ENCODE measurements at regions of chr14 and their contacts with region 1.

Region 1: DNA sequence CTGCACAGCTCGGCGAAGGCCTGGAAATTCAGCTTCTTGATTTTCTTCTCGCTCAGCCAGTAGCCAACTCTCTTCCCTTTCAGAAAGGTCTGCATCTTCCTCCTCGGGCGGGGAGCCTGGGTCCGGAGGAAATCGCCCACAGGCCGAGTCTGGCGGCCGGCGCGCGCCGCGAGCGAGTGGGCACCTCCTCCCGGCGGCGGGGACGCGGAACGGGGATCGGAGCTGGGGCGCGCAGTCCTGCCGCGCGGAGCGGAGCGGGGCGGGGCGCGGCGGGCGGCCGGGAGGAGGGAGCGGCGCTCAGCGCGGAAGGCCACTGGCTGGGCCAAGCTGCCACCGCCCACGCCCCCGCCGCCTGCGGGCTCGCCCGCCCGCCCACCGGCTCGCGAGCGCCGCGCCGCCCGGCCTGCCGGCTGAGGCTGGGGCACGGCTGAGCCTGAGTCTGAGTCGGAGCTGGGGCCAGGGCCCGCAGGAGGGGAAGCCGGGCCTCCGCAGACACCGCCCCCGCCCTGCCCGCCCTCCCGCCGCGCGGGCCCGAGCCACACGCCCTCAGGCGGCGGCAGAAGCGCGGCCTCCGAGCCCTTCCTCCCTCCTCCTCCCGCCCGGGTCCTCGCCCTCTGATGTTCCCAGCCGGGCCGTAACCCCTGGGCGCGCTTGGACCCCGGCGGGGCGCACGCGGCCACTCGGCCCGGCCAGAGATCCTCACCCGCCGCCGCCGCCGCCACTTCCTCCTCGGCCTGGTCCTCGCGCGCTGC is 480 bp downstream of the ITPK1 start:
- DNase-seq: peak; percentile 92
- ATAC-seq: peak; percentile 74
- H3K4me3 ChIP-seq: peak overlapping the region; percentile 37 to 89 (median 79)
- H3K4me3 Mint-ChIP-seq: peak overlapping the region; percentile 92
- H3K27ac ChIP-seq: peak overlapping the region; percentile 34 to 74
- H3K27ac Mint-ChIP-seq: peak overlapping the region; percentile 89
- H3K4me1 ChIP-seq: peaks cover 27 to 34% of the 10 kb centered on the region in 2 donors
- H3K4me1 Mint-ChIP-seq: peaks cover 32% of the 10 kb centered on the region
- H3K27me3 ChIP-seq: no peaks in the 10 kb centered on the region
- H3K27me3 Mint-ChIP-seq: no peaks in the 10 kb centered on the region
- CTCF ChIP-seq: peak; percentile 12

Region 2: GRCh38 chr14:92963301-92964123 is 151.7 kb before region 1 on chr14:
- CTCF ChIA-PET with region 1: no interaction called
- POLR2A ChIA-PET with region 1: no interaction called
- intact Hi-C with region 1: no loop called
- DNase-seq: no peak
- ATAC-seq: no peak
- H3K4me3 ChIP-seq: no peak overlapping the region
- H3K4me3 Mint-ChIP-seq: no peak overlapping the region
- H3K27ac ChIP-seq: no peak overlapping the region
- H3K27ac Mint-ChIP-seq: no peak overlapping the region
- H3K4me1 ChIP-seq: no peaks in the 10 kb centered on the region
- H3K4me1 Mint-ChIP-seq: peaks cover 11% of the 10 kb centered on the region
- H3K27me3 ChIP-seq: no peaks in the 10 kb centered on the region
- H3K27me3 Mint-ChIP-seq: no peaks in the 10 kb centered on the region
- CTCF ChIP-seq: no peak

Region 3: GRCh38 chr14:93064411-93065323 is 50.6 kb before region 1 on chr14:
- CTCF ChIA-PET with region 1: interaction called, 23 read pairs
- POLR2A ChIA-PET with region 1: interaction called, 8 read pairs
- intact Hi-C with region 1: no loop called
- DNase-seq: no peak
- ATAC-seq: no peak
- H3K4me3 ChIP-seq: no peak overlapping the region
- H3K4me3 Mint-ChIP-seq: peak overlapping the region; percentile 41
- H3K27ac ChIP-seq: peak overlapping the region; percentile 23 to 28
- H3K27ac Mint-ChIP-seq: peak overlapping the region; percentile 79
- H3K4me1 ChIP-seq: peaks cover 40 to 49% of the 10 kb centered on the region in 2 donors
- H3K4me1 Mint-ChIP-seq: peaks cover 75% of the 10 kb centered on the region
- H3K27me3 ChIP-seq: no peaks in the 10 kb centered on the region
- H3K27me3 Mint-ChIP-seq: no peaks in the 10 kb centered on the region
- CTCF ChIP-seq: no peak

Region 4: GRCh38 chr14:93132470-93133065 is 17.3 kb after region 1 on chr14:
- CTCF ChIA-PET with region 1: interaction called, 78 read pairs
- POLR2A ChIA-PET with region 1: interaction called, 4 read pairs
- intact Hi-C with region 1: no loop called
- DNase-seq: peak; percentile 46
- ATAC-seq: peak; percentile 54
- H3K4me3 ChIP-seq: no peak overlapping the region
- H3K4me3 Mint-ChIP-seq: no peak overlapping the region
- H3K27ac ChIP-seq: no peak overlapping the region
- H3K27ac Mint-ChIP-seq: no peak overlapping the region
- H3K4me1 ChIP-seq: no peaks in the 10 kb centered on the region
- H3K4me1 Mint-ChIP-seq: no peaks in the 10 kb centered on the region
- H3K27me3 ChIP-seq: peaks cover 0 to 4% (median 0%) of the 10 kb centered on the region in 4 experiments
- H3K27me3 Mint-ChIP-seq: no peaks in the 10 kb centered on the region
- CTCF ChIP-seq: peak; percentile 38

Region 5: DNA sequence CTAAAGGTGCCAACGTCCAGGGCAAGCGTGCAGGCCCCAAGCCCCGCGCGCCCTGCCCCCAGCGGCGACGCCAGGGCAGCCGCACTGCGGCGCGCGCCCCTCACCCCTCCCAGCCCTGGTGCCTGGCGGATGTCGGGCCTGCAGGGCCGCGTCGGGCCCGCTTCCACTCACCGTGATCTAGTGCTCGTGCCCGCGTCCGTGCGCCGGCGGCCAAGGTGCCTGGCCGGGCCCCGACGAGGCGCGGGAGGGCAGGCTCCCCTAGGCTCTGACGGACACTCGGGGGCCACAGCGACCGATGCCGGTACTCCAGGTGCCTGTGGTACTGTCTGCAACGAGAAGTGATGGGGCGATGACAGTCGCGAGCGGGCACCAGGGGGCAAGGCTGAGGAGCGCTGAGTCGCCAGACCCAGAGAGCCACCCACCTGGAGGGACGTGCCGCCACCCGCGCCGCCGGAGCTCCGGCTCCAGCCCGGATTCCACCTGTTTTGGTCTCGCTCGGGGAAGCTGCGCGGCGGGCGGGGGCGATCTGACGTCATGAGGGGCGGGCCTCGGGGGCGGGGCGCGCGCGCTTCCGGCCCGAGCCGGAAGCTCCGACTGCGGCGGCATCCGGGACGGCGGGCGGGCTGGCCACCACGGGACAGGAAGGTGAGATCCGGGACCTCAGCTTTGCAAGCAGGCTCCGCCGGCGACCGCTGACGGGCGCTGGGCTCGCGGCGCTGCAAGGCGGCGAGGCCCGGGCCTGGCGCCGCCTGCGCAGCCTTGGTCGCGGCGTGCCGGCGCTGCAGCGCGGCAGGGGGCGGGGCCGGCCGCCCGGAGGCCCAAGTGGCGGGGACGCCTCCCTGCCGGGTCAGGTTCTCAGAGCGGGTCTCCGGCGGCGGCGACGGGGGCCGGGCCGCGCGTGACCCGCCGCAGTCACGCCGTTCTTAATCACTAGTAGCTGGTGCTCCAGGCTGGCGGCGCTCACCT is 69.4 kb after region 1 on chr14 and contains the starts of genes LYSET and MOAP1:
- CTCF ChIA-PET with region 1: interaction called, 20 read pairs
- POLR2A ChIA-PET with region 1: interaction called, 5 read pairs
- intact Hi-C with region 1: loop called (anchors 1 kb)
- DNase-seq: peak; percentile 97
- ATAC-seq: peak; percentile 86
- H3K4me3 ChIP-seq: peak within 1 kb of the TSS; percentile 85 to 96 (median 90)
- H3K4me3 Mint-ChIP-seq: peak within 1 kb of the TSS; percentile 97
- H3K27ac ChIP-seq: peak within 1 kb of the TSS; percentile 97 to 98
- H3K27ac Mint-ChIP-seq: peak within 1 kb of the TSS; percentile 98
- H3K4me1 ChIP-seq: peaks cover 16 to 26% of the 10 kb centered on the region in 2 donors
- H3K4me1 Mint-ChIP-seq: peaks cover 32% of the 10 kb centered on the region
- H3K27me3 ChIP-seq: no peaks in the 10 kb centered on the region
- H3K27me3 Mint-ChIP-seq: no peaks in the 10 kb centered on the region
- CTCF ChIP-seq: peak; percentile 20
- total RNA-seq, gene LYSET: 18.0 and 18.8 TPM in 2 replicates
- total RNA-seq, gene MOAP1: 30.8 and 31.2 TPM in 2 replicates

Region 6: GRCh38 chr14:93332853-93333630 is 217.8 kb after region 1 on chr14 and contains the start of gene BTBD7:
- CTCF ChIA-PET with region 1: no interaction called
- POLR2A ChIA-PET with region 1: no interaction called
- intact Hi-C with region 1: loop called (anchors 2 kb)
- DNase-seq: peak; percentile 96
- ATAC-seq: peak; percentile 90
- H3K4me3 ChIP-seq: peak within 1 kb of the TSS; percentile 66 to 95 (median 82)
- H3K4me3 Mint-ChIP-seq: peak within 1 kb of the TSS; percentile 92
- H3K27ac ChIP-seq: peak within 1 kb of the TSS; percentile 59 to 92
- H3K27ac Mint-ChIP-seq: peak within 1 kb of the TSS; percentile 95
- H3K4me1 ChIP-seq: peaks cover 19 to 31% of the 10 kb centered on the region in 2 donors
- H3K4me1 Mint-ChIP-seq: peaks cover 49% of the 10 kb centered on the region
- H3K27me3 ChIP-seq: no peaks in the 10 kb centered on the region
- H3K27me3 Mint-ChIP-seq: no peaks in the 10 kb centered on the region
- CTCF ChIP-seq: no peak
- total RNA-seq, gene BTBD7: 48.6 and 49.0 TPM in 2 replicates

Measured in B cell (primary cell).